ENCODE measurements at regions of chr1 and their contacts with region 1.

Region 1: GRCh38 chr1:53278201-53278725 is 39.9 kb upstream of the MAGOH start:
- DNase-seq: no peak
- H3K4me3 ChIP-seq: no peak overlapping the region
- H3K27ac ChIP-seq: no peak overlapping the region
- H3K27me3 ChIP-seq: no peaks in the 10 kb centered on the region
- CTCF ChIP-seq: peak; percentile 92

Region 2: GRCh38 chr1:53196485-53197270 is 81.6 kb before region 1 on chr1 and contains the start of gene CPT2:
- CTCF ChIA-PET with region 1: no interaction called
- POLR2A ChIA-PET with region 1: no interaction called
- DNase-seq: peak; percentile 77
- H3K4me3 ChIP-seq: peak within 1 kb of the TSS; percentile 80
- H3K27ac ChIP-seq: no peak within 1 kb of the TSS
- H3K27me3 ChIP-seq: no peaks in the 10 kb centered on the region
- CTCF ChIP-seq: 0 out of 2 replicates have a peak, but pooled peaks have one; percentile 24
- polyA plus RNA-seq, gene CPT2: 17.6 and 18.8 TPM in 2 replicates

Region 3: GRCh38 chr1:53266106-53266505 is 12.2 kb before region 1 on chr1:
- CTCF ChIA-PET with region 1: interaction called, 13 read pairs
- POLR2A ChIA-PET with region 1: no interaction called
- DNase-seq: no peak
- H3K4me3 ChIP-seq: no peak overlapping the region
- H3K27ac ChIP-seq: no peak overlapping the region
- H3K27me3 ChIP-seq: no peaks in the 10 kb centered on the region
- CTCF ChIP-seq: peak; percentile 32

Region 4: GRCh38 chr1:53291574-53291973 is 13.3 kb after region 1 on chr1:
- CTCF ChIA-PET with region 1: interaction called, 34 read pairs
- POLR2A ChIA-PET with region 1: no interaction called
- DNase-seq: no peak
- H3K4me3 ChIP-seq: no peak overlapping the region
- H3K27ac ChIP-seq: no peak overlapping the region
- H3K27me3 ChIP-seq: no peaks in the 10 kb centered on the region
- CTCF ChIP-seq: no peak

Region 5: GRCh38 chr1:53393325-53393792 is 115.1 kb after region 1 on chr1:
- CTCF ChIA-PET with region 1: interaction called, 127 read pairs
- POLR2A ChIA-PET with region 1: no interaction called
- DNase-seq: peak; percentile 34
- H3K4me3 ChIP-seq: no peak overlapping the region
- H3K27ac ChIP-seq: no peak overlapping the region
- H3K27me3 ChIP-seq: peaks cover 20% of the 10 kb centered on the region
- CTCF ChIP-seq: peak; percentile 90

Region 6: GRCh38 chr1:53413175-53414001 is 135.1 kb after region 1 on chr1:
- CTCF ChIA-PET with region 1: interaction called, 14 read pairs
- POLR2A ChIA-PET with region 1: no interaction called
- DNase-seq: peak; percentile 33
- H3K4me3 ChIP-seq: no peak overlapping the region
- H3K27ac ChIP-seq: peak overlapping the region; percentile 65
- H3K27me3 ChIP-seq: peaks cover 16% of the 10 kb centered on the region
- CTCF ChIP-seq: no peak

Region 7: DNA sequence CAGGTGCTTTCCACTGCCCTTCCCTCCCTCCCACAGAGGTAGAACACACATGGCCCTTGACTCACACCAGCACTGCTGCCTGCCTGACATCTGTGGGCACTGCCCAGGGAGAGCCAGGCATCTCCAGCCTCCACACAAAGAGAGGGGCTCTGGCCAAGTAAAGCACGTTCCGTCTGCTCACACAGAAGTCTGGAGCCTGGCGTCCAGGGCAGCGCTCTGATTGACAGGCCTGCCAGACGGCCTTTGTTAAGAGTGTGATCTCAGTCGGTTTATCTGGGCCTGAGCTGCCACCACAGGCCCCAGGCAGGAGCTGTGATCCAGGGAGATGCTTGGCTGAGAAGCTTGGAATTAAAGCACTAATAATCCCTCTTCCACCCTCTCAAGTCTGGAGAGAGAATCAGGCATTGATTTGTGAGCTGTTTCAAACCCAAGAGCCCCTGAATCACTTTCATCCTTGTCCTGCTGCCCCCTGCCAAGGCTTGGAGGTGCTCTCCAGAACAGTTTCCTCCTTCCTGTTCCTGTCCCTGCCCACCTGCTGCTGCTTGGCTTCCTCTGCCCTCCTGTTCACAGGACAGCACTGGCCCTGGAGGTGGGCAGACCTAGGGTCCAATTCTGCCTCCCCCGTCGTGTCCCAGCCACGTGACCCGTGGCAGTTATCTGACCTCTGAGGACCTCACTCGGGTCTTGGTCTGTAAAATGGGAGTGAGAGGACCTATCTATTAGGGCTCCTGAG is 184.7 kb after region 1 on chr1:
- CTCF ChIA-PET with region 1: interaction called, 18 read pairs
- POLR2A ChIA-PET with region 1: no interaction called
- DNase-seq: no peak
- H3K4me3 ChIP-seq: no peak overlapping the region
- H3K27ac ChIP-seq: no peak overlapping the region
- H3K27me3 ChIP-seq: peaks cover 7% of the 10 kb centered on the region
- CTCF ChIP-seq: no peak

Region 8: DNA sequence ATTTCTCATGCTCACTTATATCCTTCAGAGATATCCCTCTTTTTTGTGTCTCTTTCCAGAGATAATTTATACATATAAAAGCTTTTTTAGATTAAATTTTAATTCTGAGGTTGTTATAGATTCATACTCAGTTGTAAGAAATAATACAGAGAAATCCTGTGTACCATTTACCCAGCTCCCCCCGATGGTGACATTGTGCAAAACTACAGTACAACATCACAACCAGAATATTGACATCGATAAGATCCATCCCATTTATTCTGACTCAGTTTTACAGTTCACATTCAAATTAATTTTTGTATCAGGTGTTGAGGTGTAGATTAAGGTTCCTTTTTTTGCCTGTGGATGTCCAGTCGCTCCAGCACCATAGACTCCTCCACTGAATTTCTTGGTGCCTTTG is 195.2 kb after region 1 on chr1:
- CTCF ChIA-PET with region 1: interaction called, 11 read pairs
- POLR2A ChIA-PET with region 1: no interaction called
- DNase-seq: no peak
- H3K4me3 ChIP-seq: no peak overlapping the region
- H3K27ac ChIP-seq: no peak overlapping the region
- H3K27me3 ChIP-seq: peaks cover 13% of the 10 kb centered on the region
- CTCF ChIP-seq: peak; percentile 48